Activated CD4-positive, alpha-beta memory T cell treated with anti-CD3 and anti-CD28 coated beads, Interleukin-2, amount 10 ng/mL, durations not matched to agents 7 days and 5 days (primary cell): ENCODE measurements at regions of chr5 and their contacts with region 1.

Region 1: DNA sequence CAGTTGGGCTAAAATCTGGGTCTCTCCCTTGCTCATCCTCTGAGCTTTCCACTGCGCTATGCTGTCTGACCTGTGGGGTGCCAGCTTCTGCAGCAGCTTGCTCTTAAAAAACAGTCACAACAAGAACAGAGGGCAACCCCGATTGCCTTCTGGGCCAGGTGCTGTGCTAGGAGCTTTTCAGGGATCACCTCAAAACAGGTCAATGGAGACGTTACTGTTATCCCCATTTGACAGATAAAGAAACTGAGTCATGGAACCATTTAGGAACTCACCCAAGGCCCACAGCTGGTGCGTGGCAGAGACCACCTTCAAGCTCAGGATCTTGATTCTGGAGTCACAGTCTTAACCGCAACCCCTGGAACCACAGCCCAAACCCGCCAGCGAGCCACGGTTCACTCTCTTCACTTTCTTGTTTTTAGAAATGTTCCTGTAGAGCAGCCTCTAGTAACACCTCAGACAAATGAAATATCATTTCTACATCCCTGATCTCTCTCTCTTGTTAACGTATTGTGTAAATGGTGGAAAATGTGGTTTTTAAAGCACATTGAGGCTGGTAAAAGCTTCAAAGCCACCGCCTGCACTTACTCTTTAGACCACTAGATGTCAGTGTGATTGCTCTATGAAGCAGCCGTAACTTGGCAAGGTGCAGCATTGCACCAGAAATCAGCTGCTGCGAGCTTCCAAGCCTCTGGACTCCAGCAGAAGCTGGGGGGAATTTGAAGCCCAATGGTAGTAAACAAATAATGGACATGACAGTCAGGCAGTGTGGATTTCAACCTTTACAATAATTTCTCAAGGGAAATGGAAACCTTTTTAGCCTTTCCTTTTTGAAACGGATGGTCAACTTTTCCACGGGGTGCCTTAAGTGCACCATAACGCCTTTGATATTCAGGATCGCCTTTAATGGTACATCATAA is 1.7 kb downstream of the FYB1 start:
- DNase-seq: peak; percentile 79
- H3K4me3 Mint-ChIP-seq: peak overlapping the region; percentile 74
- H3K27ac Mint-ChIP-seq: peak overlapping the region; percentile 78
- H3K4me1 Mint-ChIP-seq: peaks cover 57% of the 10 kb centered on the region
- H3K27me3 Mint-ChIP-seq: no peaks in the 10 kb centered on the region

Region 2: GRCh38 chr5:39040875-39041274 is 176.7 kb before region 1 on chr5:
- CTCF ChIA-PET with region 1: no interaction called
- POLR2A ChIA-PET with region 1: no interaction called
- DNase-seq: no peak
- H3K4me3 Mint-ChIP-seq: no peak overlapping the region
- H3K27ac Mint-ChIP-seq: no peak overlapping the region
- H3K4me1 Mint-ChIP-seq: peaks cover 4% of the 10 kb centered on the region
- H3K27me3 Mint-ChIP-seq: no peaks in the 10 kb centered on the region

Region 3: GRCh38 chr5:39074016-39074886 is 143.4 kb before region 1 on chr5 and contains the start of gene RICTOR:
- CTCF ChIA-PET with region 1: interaction called, 12 read pairs
- POLR2A ChIA-PET with region 1: interaction called, 31 read pairs
- DNase-seq: peak; percentile 93
- H3K4me3 Mint-ChIP-seq: peak within 1 kb of the TSS; percentile 91
- H3K27ac Mint-ChIP-seq: peak within 1 kb of the TSS; percentile 95
- H3K4me1 Mint-ChIP-seq: peaks cover 54% of the 10 kb centered on the region
- H3K27me3 Mint-ChIP-seq: peaks cover 14% of the 10 kb centered on the region
- total RNA-seq, gene RICTOR: 50.4 to 56.4 TPM

Region 4: GRCh38 chr5:39158127-39158593 is 59.5 kb before region 1 on chr5:
- CTCF ChIA-PET with region 1: interaction called, 27 read pairs
- POLR2A ChIA-PET with region 1: interaction called, 36 read pairs
- DNase-seq: no peak
- H3K4me3 Mint-ChIP-seq: peak overlapping the region; percentile 37
- H3K27ac Mint-ChIP-seq: peak overlapping the region; percentile 38
- H3K4me1 Mint-ChIP-seq: peaks cover 81% of the 10 kb centered on the region
- H3K27me3 Mint-ChIP-seq: no peaks in the 10 kb centered on the region

Region 5: DNA sequence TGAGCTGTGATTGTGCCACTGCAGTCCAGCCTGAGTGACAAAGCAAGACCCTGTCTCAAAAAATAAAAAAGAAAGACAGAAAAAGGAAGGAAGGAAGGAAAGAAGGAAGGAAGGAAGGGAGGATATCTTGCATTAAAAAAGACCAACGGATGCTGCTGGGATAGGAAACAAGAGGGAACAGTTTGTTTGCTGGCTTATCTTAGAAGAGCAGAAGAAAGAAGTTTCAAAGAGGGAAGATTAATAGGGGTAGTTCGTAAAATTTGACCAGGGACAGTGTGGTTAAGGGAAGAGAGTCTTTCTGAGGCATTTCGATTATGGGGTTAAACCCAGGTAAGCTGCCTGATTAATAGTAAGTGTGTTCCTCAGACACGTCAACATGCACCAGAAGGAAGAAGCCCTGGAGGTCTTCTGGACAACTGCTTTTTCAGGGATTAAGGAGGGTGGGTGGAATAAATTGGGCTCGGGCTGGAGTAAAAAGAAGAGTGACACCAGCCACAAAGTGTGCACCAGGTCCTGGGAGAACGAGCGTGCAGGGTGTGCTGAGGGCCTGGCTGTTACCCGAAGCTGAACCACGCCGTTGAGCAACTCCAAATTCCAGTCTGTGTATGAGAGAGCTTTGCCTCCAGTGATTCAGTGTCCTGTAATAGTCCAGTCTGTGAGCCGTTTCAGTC is 23.0 kb before region 1 on chr5:
- CTCF ChIA-PET with region 1: interaction called, 97 read pairs
- POLR2A ChIA-PET with region 1: interaction called, 238 read pairs
- DNase-seq: no peak
- H3K4me3 Mint-ChIP-seq: peak overlapping the region; percentile 76
- H3K27ac Mint-ChIP-seq: peak overlapping the region; percentile 79
- H3K4me1 Mint-ChIP-seq: peaks cover 77% of the 10 kb centered on the region
- H3K27me3 Mint-ChIP-seq: no peaks in the 10 kb centered on the region

Region 6: GRCh38 chr5:39264528-39264927 is 46.9 kb after region 1 on chr5:
- CTCF ChIA-PET with region 1: interaction called, 15 read pairs
- POLR2A ChIA-PET with region 1: no interaction called
- DNase-seq: peak; percentile 31
- H3K4me3 Mint-ChIP-seq: no peak overlapping the region
- H3K27ac Mint-ChIP-seq: peak overlapping the region; percentile 0
- H3K4me1 Mint-ChIP-seq: peaks cover 26% of the 10 kb centered on the region
- H3K27me3 Mint-ChIP-seq: no peaks in the 10 kb centered on the region

Region 7: DNA sequence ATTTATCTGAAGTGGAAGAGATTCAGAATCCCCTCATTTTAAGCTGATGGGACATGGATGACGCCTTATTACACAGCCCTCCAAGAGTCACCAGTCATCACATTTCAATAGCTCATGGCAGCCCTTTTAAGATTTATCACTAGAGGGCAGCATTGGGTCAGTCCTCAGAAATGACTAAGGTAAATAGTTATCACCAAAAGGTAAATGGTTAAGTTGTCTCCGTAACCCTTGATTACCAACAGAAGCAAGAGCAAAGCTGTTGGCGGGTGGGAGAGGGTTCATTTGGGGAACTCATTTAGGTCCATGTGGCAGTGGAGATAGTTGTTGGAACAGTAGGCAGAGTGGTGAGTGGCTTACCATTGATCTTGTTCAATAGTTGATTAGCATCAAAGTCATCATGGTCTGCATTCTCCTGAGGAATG is 158.7 kb after region 1 on chr5:
- CTCF ChIA-PET with region 1: interaction called, 22 read pairs
- POLR2A ChIA-PET with region 1: no interaction called
- DNase-seq: peak; percentile 26
- H3K4me3 Mint-ChIP-seq: no peak overlapping the region
- H3K27ac Mint-ChIP-seq: no peak overlapping the region
- H3K4me1 Mint-ChIP-seq: no peaks in the 10 kb centered on the region
- H3K27me3 Mint-ChIP-seq: peaks cover 5% of the 10 kb centered on the region

Region 8: DNA sequence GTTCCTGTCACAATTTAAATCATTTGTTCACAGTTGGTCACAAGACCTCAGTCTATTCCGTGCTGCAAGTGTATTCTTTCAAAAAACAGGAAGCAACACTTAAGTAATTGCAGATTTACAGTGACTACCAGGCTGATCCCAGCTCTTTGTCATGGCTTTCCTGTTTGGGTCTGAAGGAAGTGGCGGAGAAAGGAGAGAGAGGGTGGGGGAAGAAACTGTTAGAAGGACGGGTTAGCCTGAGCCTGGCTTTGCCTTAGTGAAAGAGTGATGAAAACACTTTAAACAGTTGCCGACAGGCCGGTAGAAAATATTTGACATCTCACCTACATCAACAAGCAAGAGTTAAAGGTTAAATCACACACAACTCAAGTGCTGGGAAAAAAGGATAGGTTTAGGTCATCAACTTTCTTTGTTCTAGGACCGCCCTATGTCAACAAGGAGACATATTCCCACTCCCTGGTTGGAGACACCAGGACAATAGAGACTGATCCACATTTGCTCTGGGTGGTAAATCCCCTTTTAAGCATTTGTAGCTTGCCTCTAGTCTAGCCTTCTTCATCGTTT is 309.4 kb after region 1 on chr5:
- CTCF ChIA-PET with region 1: no interaction called
- POLR2A ChIA-PET with region 1: no interaction called
- DNase-seq: no peak
- H3K4me3 Mint-ChIP-seq: no peak overlapping the region
- H3K27ac Mint-ChIP-seq: no peak overlapping the region
- H3K4me1 Mint-ChIP-seq: no peaks in the 10 kb centered on the region
- H3K27me3 Mint-ChIP-seq: peaks cover 22% of the 10 kb centered on the region

Region 9: DNA sequence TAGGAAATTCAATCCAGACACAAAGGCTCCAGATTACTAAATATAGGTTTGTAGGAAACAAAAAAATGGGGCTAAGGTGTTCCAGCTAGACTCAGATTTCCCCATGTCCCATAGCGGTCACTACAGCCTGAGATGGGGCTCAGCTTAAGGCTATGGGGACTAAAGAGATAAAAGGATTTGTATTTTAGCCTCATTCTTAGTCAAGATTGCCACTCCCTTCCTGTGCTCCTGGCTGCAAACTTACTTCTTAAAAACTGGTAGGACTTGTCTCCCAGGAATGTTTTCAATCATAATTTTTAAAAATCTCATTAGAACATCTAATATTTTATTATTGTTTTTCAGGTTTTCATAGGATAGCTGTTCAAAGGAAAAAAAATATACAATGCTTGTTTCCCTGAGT is 460.9 kb after region 1 on chr5:
- CTCF ChIA-PET with region 1: no interaction called
- POLR2A ChIA-PET with region 1: no interaction called
- DNase-seq: no peak
- H3K4me3 Mint-ChIP-seq: no peak overlapping the region
- H3K27ac Mint-ChIP-seq: no peak overlapping the region
- H3K4me1 Mint-ChIP-seq: no peaks in the 10 kb centered on the region
- H3K27me3 Mint-ChIP-seq: peaks cover 9% of the 10 kb centered on the region